ENCODE measurements at regions of chr12 and their contacts with region 1.

Region 1: GRCh38 chr12:49623142-49623904 is at the start of gene PRPF40B:
- DNase-seq: peak; percentile 91
- H3K4me3 Mint-ChIP-seq: peak within 1 kb of the TSS; percentile 78
- H3K27ac Mint-ChIP-seq: peak within 1 kb of the TSS; percentile 73
- H3K4me1 Mint-ChIP-seq: peaks cover 20% of the 10 kb centered on the region
- H3K27me3 Mint-ChIP-seq: peaks cover 3% of the 10 kb centered on the region
- total RNA-seq, gene PRPF40B: 6.2 to 8.9 TPM

Region 2: GRCh38 chr12:49366652-49367380 is 256.5 kb before region 1 on chr12:
- CTCF ChIA-PET with region 1: interaction called, 4 read pairs
- POLR2A ChIA-PET with region 1: interaction called, 10 read pairs
- intact Hi-C with region 1: loop called (anchors 5 kb)
- DNase-seq: peak; percentile 93
- H3K4me3 Mint-ChIP-seq: peak overlapping the region; percentile 95
- H3K27ac Mint-ChIP-seq: peak overlapping the region; percentile 95
- H3K4me1 Mint-ChIP-seq: peaks cover 23% of the 10 kb centered on the region
- H3K27me3 Mint-ChIP-seq: no peaks in the 10 kb centered on the region

Region 3: DNA sequence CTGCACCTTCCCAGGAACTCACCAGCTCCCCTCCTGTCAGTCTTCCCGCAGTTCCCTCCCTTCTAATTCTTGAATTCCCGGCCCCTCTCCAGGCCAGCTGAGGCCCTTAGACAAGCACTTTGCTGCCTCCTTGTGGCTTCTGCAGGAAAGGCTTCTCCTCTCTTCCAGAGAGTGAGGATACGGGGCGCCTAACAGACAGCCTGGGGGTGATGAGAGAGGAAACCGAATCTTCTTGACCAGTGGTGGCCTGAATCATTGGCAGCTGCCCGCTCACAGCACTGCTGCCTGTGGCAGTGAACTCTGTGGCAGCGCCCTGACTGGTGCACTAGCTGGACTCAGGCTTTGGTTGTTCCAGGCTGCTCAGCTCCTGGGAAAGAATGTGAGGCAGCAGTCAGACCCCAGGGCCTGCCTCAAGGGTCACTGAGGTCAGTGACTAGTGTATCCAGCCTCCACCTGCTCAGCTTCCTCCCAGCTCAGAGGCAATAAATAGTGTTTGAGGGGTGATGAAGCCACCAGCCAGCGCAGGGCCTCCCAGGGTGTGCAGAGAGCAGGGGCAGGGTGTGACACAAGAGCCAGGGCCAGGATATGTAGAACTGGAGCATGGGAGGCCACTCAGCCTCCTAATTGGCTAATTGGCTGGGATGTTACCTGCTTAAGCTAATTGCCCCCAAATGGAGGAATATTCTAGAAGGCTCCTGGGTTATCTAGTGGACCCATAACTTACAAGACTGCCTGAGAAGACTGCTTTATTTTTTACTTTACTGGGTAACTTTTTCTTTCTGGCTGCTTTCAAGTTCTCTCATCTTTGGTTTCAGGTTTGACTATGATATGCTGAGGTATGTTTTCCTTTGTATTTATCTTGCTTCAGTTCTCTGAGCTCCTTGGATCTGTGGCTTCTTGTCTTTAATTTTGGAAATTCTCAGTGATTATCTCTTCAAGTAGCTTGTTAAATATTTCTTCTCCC is 42.5 kb before region 1 on chr12:
- CTCF ChIA-PET with region 1: interaction called, 4 read pairs
- POLR2A ChIA-PET with region 1: no interaction called
- intact Hi-C with region 1: loop called (anchors 5 kb)
- DNase-seq: peak; percentile 65
- H3K4me3 Mint-ChIP-seq: no peak overlapping the region
- H3K27ac Mint-ChIP-seq: peak overlapping the region; percentile 8
- H3K4me1 Mint-ChIP-seq: peaks cover 18% of the 10 kb centered on the region
- H3K27me3 Mint-ChIP-seq: no peaks in the 10 kb centered on the region

Region 4: GRCh38 chr12:49662998-49663843 is 39.9 kb after region 1 on chr12:
- CTCF ChIA-PET with region 1: interaction called, 3 read pairs
- POLR2A ChIA-PET with region 1: interaction called, 3 read pairs
- intact Hi-C with region 1: loop called (anchors 2 kb)
- DNase-seq: peak; percentile 86
- H3K4me3 Mint-ChIP-seq: peak overlapping the region; percentile 67
- H3K27ac Mint-ChIP-seq: peak overlapping the region; percentile 95
- H3K4me1 Mint-ChIP-seq: peaks cover 70% of the 10 kb centered on the region
- H3K27me3 Mint-ChIP-seq: no peaks in the 10 kb centered on the region

Region 5: DNA sequence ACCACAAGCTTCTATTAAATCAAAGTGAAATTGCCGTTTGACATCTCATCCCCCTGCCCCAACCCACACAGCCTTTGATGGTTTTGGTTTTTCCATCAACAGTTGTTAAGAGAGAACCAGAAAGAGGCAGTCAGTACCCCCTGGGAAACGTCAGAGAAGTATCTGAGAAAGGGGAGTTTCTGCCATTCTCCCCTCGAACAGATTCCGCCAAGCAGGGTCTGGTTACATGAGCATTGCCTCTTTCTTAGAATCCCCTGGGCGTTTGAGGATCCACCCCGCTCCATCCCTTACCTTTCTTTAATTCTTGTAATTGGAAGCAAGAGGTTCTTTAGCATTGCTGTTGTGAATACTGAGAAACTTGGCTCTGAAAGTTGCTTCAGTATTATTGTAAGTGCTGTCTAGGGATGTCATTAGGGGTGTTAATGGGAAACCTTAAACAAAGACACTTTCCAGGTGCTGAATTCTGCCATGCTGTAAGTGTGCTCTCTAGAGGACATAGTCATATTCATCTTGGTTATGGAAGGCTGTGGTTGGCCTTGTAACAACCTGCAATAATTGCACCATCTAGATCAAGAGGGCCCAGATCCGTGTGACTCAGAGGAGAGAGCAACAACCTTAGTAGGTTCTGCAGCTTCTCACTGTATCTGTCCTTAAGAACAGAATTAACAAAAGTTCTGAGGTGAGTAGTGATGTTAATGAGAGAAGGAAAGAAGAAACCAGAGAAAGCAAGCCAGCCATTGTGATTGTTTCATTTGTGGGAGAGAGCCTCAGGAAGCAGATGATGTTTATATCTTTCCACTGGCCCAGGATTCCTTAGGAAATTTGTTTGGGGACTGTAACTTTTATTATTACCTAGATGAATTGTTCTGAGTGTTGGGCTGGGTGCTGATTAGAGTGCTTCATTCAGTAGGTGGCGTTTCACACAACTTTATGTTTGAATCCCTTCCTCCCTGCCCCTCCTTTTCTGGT is 127.0 kb after region 1 on chr12:
- CTCF ChIA-PET with region 1: no interaction called
- POLR2A ChIA-PET with region 1: no interaction called
- intact Hi-C with region 1: loop called (anchors 1 kb)
- DNase-seq: peak; percentile 77
- H3K4me3 Mint-ChIP-seq: peak overlapping the region; percentile 54
- H3K27ac Mint-ChIP-seq: peak overlapping the region; percentile 92
- H3K4me1 Mint-ChIP-seq: peaks cover 86% of the 10 kb centered on the region
- H3K27me3 Mint-ChIP-seq: no peaks in the 10 kb centered on the region

Measured in activated CD4-positive, alpha-beta memory T cell treated with anti-CD3 and anti-CD28 coated beads for 36 hours (primary cell).